ENCODE measurements at regions of chr22 and their contacts with region 1.

Region 1: GRCh38 chr22:50326959-50327710 is at the start of gene DENND6B:
- DNase-seq: peak; percentile 45
- ATAC-seq: peak; percentile 81
- H3K4me3 ChIP-seq: peak within 1 kb of the TSS; percentile 69 to 83 (median 81)
- H3K27ac ChIP-seq: peak within 1 kb of the TSS; percentile 77
- H3K4me1 ChIP-seq: peaks cover 65% of the 10 kb centered on the region
- H3K27me3 ChIP-seq: no peaks in the 10 kb centered on the region; a peak in 1 of 5 replicates
- CTCF ChIP-seq: peak; percentile 54; the same call in 1 of the 2 replicates
- EP300 ChIP-seq: no peak
- POLR2A ChIP-seq: peak; percentile 75 to 77
- RAD21 ChIP-seq: peak; percentile 99
- total RNA-seq, gene DENND6B: 0.84 and 0.95 TPM in 2 replicates

Region 2: DNA sequence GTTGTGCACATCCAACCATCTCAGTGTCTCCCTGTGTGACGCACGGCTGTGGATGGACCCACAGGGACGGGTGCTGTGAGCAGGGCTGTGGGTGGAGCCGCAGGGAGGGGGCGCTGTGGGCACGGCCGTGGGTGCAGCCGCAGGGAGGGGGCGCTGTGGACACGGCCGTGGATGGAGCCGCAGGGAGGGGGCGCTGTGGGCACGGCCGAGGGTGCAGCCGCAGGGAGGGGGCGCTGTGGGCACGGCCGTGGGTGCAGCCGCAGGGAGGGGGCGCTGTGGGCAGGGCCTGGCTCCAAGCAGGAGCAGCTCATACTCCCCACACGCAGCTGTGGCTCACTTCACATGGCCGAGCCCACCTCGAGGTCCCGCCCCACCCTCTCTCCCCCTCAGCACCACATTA is 51.0 kb before region 1 on chr22:
- CTCF ChIA-PET with region 1: interaction called, 133 read pairs
- POLR2A ChIA-PET with region 1: no interaction called
- in situ Hi-C with region 1: loop called (anchors 5 kb)
- intact Hi-C with region 1: loop called (anchors 1 kb)
- DNase-seq: peak; percentile 16
- ATAC-seq: peak; percentile 27
- H3K4me3 ChIP-seq: no peak overlapping the region
- H3K27ac ChIP-seq: no peak overlapping the region
- H3K4me1 ChIP-seq: peaks cover 11% of the 10 kb centered on the region
- H3K27me3 ChIP-seq: peaks cover 0 to 3% of the 10 kb centered on the region in 2 experiments; a peak in 3 of 5 replicates
- CTCF ChIP-seq: peak; percentile 75
- EP300 ChIP-seq: no peak
- POLR2A ChIP-seq: no peak
- RAD21 ChIP-seq: peak; percentile 21; the same call in 1 of the 2 replicates

Measured in HepG2 (cell line).